Activated CD4-positive, alpha-beta memory T cell treated with anti-CD3 and anti-CD28 coated beads for 36 hours (primary cell): ENCODE measurements at regions of chr19 and their contacts with region 1.

Region 1: GRCh38 chr19:47483800-47484690 is at the start of gene KPTN:
- DNase-seq: peak; percentile 94
- H3K4me3 Mint-ChIP-seq: peak within 1 kb of the TSS; percentile 95
- H3K27ac Mint-ChIP-seq: peak within 1 kb of the TSS; percentile 94
- H3K4me1 Mint-ChIP-seq: peaks cover 20% of the 10 kb centered on the region
- H3K27me3 Mint-ChIP-seq: no peaks in the 10 kb centered on the region
- total RNA-seq, gene KPTN: 7.0 to 9.2 TPM

Region 2: DNA sequence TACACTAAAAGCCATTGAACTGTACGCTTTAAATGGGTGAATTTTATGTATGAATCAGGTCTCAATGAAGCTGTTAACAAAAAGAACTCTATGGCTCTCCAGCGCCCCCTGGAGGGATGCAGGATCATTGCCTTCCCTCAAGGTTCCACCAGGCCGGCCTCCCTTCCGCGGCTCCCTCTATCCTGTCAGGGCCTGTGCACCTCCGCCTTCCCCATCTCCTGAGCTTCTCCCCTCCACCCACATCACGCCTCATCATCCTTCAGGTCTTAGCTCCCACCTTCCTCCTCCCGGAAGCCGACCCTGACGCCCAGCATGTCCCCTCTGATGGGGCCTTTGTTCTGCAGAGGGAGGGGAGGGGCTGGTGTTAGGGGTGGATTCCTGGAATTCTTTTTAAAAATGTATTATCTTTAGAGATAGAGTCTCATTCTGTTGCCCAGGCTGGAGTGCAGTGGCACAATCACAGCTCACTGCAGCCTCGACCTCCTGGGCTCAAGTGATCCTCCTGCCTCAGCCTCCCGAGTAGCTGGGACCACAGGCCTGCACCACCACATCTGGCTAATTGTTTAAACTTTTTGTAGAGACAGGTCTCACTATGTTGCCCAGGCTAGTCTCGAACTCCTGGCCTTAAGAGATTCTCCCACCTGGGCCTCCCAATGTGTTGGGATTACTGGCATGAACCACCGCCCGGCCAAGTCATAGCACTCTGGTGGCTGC is 92.4 kb before region 1 on chr19:
- CTCF ChIA-PET with region 1: no interaction called
- POLR2A ChIA-PET with region 1: no interaction called
- intact Hi-C with region 1: no loop called
- DNase-seq: peak; percentile 87
- H3K4me3 Mint-ChIP-seq: no peak overlapping the region
- H3K27ac Mint-ChIP-seq: no peak overlapping the region
- H3K4me1 Mint-ChIP-seq: no peaks in the 10 kb centered on the region
- H3K27me3 Mint-ChIP-seq: peaks cover 5% of the 10 kb centered on the region

Region 3: DNA sequence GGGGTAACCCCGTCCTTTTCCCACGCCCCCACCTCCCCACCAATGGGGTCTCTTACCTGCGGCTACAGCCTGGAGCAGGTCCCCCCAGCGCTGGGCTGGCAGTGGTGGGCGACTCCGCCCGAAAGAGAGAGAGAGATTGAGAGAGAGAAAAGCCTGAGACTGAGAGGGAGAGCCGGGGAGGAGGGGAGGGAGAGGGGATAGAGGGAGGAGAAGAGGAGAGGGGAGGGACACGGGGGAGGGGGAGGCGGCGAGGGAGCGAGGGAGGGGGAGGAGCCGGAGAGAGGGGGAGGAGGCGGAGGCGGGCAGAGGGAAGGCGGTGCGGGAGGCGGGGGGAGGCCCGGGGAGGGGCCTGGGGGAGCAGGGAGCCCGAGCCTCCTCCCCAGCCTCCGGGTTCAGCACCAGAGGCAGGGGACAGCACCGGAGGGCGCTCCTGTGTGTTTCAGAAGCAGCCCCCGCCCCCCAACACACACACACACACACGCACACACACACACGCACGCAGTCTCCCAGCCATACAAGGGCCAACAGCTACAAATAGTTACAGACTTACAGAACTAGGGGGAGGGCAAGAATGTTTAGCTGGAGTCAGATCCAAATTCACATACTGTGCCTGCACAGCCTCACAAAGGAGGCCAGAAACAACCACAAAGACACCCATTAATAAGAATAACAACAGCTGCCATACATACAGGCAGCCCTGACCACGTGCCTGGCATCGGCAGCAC is 12.2 kb before region 1 on chr19 and contains the start of gene SLC8A2:
- CTCF ChIA-PET with region 1: interaction called, 10 read pairs
- POLR2A ChIA-PET with region 1: interaction called, 7 read pairs
- intact Hi-C with region 1: no loop called
- DNase-seq: peak; percentile 72
- H3K4me3 Mint-ChIP-seq: no peak within 1 kb of the TSS
- H3K27ac Mint-ChIP-seq: no peak within 1 kb of the TSS
- H3K4me1 Mint-ChIP-seq: peaks cover 9% of the 10 kb centered on the region
- H3K27me3 Mint-ChIP-seq: peaks cover 45% of the 10 kb centered on the region
- total RNA-seq, gene SLC8A2: 0.14 TPM in 1 of 2 experiments, not detected in the other

Region 4: GRCh38 chr19:47494729-47495128 is 10.7 kb after region 1 on chr19:
- CTCF ChIA-PET with region 1: interaction called, 17 read pairs
- POLR2A ChIA-PET with region 1: interaction called, 4 read pairs
- intact Hi-C with region 1: no loop called
- DNase-seq: no peak
- H3K4me3 Mint-ChIP-seq: no peak overlapping the region
- H3K27ac Mint-ChIP-seq: no peak overlapping the region
- H3K4me1 Mint-ChIP-seq: no peaks in the 10 kb centered on the region
- H3K27me3 Mint-ChIP-seq: no peaks in the 10 kb centered on the region

Region 5: DNA sequence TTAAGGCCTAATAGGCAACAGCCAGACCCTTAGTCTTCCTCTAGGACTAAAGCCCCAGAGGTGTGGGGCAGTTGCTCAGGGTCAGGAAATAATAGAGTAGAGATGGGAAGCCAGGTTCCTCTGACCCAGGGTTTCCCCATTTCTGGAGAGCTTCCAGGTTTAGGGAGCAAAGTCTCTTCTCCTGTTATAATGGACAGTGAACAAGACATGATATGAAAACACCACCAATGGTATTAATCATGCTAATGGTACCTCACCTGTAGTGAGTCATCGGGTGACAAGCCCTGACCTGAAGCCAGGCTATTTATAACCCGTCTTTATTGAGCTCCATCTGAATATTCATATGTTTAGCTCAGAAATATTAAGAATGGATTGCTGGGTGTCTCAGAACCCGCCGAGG is 149.5 kb after region 1 on chr19:
- CTCF ChIA-PET with region 1: no interaction called
- POLR2A ChIA-PET with region 1: no interaction called
- intact Hi-C with region 1: no loop called
- DNase-seq: no peak
- H3K4me3 Mint-ChIP-seq: no peak overlapping the region
- H3K27ac Mint-ChIP-seq: no peak overlapping the region
- H3K4me1 Mint-ChIP-seq: peaks cover 20% of the 10 kb centered on the region
- H3K27me3 Mint-ChIP-seq: no peaks in the 10 kb centered on the region

Region 6: GRCh38 chr19:47778089-47778953 is 294.3 kb after region 1 on chr19 and contains the start of gene SELENOW:
- CTCF ChIA-PET with region 1: no interaction called
- POLR2A ChIA-PET with region 1: no interaction called
- intact Hi-C with region 1: no loop called
- DNase-seq: peak; percentile 85
- H3K4me3 Mint-ChIP-seq: peak within 1 kb of the TSS; percentile 95
- H3K27ac Mint-ChIP-seq: peak within 1 kb of the TSS; percentile 92
- H3K4me1 Mint-ChIP-seq: peaks cover 27% of the 10 kb centered on the region
- H3K27me3 Mint-ChIP-seq: no peaks in the 10 kb centered on the region
- total RNA-seq, gene SELENOW: 162 to 174 TPM